ENCODE measurements at regions of chr11 and their contacts with region 1.

Region 1: GRCh38 chr11:86990515-86990914 is 35.3 kb upstream of the FZD4 start:
- DNase-seq: peak; percentile 63
- H3K4me3 Mint-ChIP-seq: no peak overlapping the region
- H3K27ac Mint-ChIP-seq: no peak overlapping the region
- H3K4me1 Mint-ChIP-seq: peaks cover 13% of the 10 kb centered on the region
- H3K27me3 Mint-ChIP-seq: no peaks in the 10 kb centered on the region
- CTCF ChIP-seq: no peak

Region 2: DNA sequence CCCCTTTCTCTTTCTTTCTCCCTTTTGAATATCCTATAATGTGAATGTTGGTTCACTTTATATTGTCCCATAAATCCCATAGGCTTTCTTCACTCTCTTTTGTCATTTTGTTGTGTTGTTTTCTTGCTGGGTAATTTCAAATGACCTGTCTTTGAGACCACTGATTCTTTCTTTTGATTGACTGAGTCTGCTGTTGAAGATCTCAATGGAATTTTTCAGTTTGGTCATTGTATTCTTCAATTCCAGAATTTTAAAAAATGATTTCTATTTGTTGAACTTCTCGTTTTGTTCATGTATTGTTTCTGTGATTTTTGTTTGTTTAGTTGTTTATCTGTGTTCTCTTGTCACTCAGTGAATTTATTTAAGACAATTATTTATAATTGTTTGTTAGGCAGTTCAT is 17.8 kb before region 1 on chr11:
- CTCF ChIA-PET with region 1: no interaction called
- POLR2A ChIA-PET with region 1: no interaction called
- intact Hi-C with region 1: no loop called
- DNase-seq: no peak
- H3K4me3 Mint-ChIP-seq: no peak overlapping the region
- H3K27ac Mint-ChIP-seq: no peak overlapping the region
- H3K4me1 Mint-ChIP-seq: no peaks in the 10 kb centered on the region
- H3K27me3 Mint-ChIP-seq: no peaks in the 10 kb centered on the region
- CTCF ChIP-seq: no peak

Region 3: DNA sequence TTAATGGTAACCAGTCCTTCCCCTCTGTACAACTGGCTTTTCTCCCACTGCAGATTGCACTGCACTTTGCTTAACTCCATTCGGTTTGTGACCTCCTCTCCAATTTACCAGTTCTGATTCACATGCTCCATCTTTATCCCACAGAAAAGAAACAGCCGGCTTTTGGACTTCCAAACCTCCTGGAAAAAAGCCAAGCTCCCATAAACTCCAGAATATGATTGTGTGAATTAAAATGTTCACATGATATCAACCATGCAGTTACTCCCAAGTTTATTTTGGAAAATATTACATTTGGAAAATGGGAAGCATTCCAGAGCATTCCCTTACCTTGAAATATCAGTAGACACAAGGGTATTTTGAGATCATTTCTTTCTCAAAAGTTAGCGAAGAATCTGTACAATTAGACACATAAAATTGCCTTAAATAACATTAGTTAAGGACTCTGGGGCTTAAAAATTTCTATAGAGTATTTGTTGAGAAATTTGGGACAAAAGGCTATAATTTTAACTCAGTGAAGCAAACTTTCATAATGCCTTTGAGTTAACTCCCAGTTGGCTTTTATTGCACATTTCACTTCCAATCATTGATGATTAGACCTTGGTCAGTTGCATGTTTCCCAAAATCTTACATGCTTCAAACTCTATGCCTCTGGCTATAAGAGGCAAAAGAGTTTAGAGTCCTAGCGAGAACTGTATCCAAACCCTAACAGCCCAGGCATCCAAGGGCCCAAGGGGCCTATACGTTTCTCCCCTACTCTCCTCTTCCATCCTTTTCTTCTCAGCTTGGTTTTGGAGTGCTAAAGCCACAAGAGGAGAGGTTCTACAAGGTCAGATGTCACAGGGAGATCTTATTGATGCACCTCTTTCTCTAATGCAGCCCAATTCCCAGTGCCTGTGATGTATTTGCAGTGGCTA is 23.7 kb after region 1 on chr11:
- CTCF ChIA-PET with region 1: interaction called, 14 read pairs
- POLR2A ChIA-PET with region 1: interaction called, 3 read pairs
- intact Hi-C with region 1: no loop called
- DNase-seq: no peak
- H3K4me3 Mint-ChIP-seq: no peak overlapping the region
- H3K27ac Mint-ChIP-seq: no peak overlapping the region
- H3K4me1 Mint-ChIP-seq: no peaks in the 10 kb centered on the region
- H3K27me3 Mint-ChIP-seq: no peaks in the 10 kb centered on the region
- CTCF ChIP-seq: no peak

Region 4: GRCh38 chr11:87022254-87022653 is 31.7 kb after region 1 on chr11:
- CTCF ChIA-PET with region 1: interaction called, 13 read pairs
- POLR2A ChIA-PET with region 1: no interaction called
- intact Hi-C with region 1: no loop called
- DNase-seq: no peak
- H3K4me3 Mint-ChIP-seq: no peak overlapping the region
- H3K27ac Mint-ChIP-seq: no peak overlapping the region
- H3K4me1 Mint-ChIP-seq: peaks cover 6% of the 10 kb centered on the region
- H3K27me3 Mint-ChIP-seq: no peaks in the 10 kb centered on the region
- CTCF ChIP-seq: no peak

Region 5: DNA sequence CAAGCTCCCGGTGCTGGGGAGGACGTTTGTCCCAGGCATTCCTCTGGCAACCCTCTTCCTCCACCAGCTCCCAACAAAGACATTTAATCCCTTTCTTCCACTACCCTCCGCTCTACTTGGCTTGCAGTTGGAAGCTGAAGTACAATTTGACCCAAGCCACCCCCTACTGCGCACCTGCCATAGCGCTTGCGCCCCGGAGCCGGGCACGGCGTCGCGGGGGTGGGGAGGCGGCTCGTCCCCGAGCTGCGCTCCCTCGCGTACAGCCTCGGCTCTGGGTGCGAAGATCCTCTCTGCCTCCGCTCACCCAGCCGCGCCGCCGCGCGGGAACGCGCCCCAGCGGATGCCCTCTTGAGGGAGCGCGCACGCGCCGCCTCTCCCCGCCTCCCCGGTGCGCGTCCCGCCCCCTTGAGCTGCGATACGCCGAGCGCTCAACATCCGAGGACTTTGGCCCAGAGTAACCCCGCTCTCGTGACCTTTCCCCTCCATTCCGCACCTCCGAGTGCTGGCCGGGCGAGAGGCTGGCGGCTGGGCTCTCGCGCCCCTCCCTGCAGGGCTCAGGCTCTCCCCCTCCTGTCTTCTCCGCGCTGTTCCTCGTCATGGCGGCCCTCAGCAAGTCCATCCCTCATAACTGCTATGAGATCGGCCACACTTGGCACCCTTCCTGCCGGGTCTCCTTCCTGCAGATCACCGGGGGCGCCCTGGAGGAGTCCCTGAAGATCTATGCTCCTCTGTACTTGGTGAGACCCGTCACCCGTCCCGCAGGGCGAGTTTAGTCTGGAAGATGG is 47.1 kb after region 1 on chr11 and contains the start of gene TMEM135:
- CTCF ChIA-PET with region 1: interaction called, 13 read pairs
- POLR2A ChIA-PET with region 1: interaction called, 5 read pairs
- intact Hi-C with region 1: loop called (anchors 2 kb)
- DNase-seq: peak; percentile 95
- H3K4me3 Mint-ChIP-seq: peak within 1 kb of the TSS; percentile 94
- H3K27ac Mint-ChIP-seq: peak within 1 kb of the TSS; percentile 76
- H3K4me1 Mint-ChIP-seq: peaks cover 36% of the 10 kb centered on the region
- H3K27me3 Mint-ChIP-seq: no peaks in the 10 kb centered on the region
- CTCF ChIP-seq: no peak
- total RNA-seq, gene TMEM135: 10.7 and 17.4 TPM in 2 replicates

Region 6: GRCh38 chr11:87193756-87194470 is 203.4 kb after region 1 on chr11:
- CTCF ChIA-PET with region 1: no interaction called
- POLR2A ChIA-PET with region 1: no interaction called
- intact Hi-C with region 1: no loop called
- DNase-seq: no peak
- H3K4me3 Mint-ChIP-seq: no peak overlapping the region
- H3K27ac Mint-ChIP-seq: no peak overlapping the region
- H3K4me1 Mint-ChIP-seq: peaks cover 7% of the 10 kb centered on the region
- H3K27me3 Mint-ChIP-seq: no peaks in the 10 kb centered on the region
- CTCF ChIP-seq: no peak

Measured in MCF 10A (cell line).